ENCODE measurements at regions of chr1 and their contacts with region 1.

Region 1: DNA sequence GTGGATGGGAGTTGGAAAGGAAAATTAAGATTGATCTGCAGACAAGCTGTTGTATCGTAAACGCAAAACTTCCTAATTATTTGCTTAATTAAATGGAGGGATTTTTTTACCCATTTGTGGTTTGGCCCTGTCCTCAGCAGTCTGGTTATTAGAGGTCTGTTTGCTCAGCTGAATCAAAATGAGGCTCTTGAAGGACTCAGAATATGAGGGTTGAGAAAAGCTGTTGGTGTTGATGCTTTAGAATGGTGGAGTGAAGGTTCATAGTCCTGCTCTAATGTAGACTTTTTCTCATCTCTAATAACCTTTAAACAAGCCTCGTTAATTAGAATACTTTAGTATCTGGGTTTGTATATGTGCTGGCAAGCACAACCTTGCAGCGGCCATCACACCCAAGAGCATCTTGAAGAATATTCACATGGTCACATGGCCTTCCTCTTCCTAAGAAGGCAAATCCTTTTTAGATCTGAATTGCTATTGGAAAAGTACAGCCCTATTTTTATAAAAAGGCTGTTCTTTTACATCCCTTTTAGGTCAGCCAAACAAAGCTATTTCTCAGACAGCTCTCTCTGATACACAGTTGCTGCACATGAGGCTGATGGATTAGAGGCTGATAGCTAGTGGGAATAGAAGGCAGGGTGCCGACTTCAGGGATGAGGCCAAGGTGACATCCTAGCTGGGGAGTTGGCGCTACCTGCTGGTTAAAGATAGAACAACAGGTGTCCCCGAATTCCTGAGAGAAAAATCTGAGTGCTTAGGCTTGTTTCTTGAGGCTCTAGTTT is 53.8 kb downstream of the MACF1 start:
- DNase-seq: peak; percentile 54 to 71 (median 61)
- H3K4me3 ChIP-seq: no peak overlapping the region
- H3K4me3 Mint-ChIP-seq: peak overlapping the region in 1 of 8 donors; percentile 22
- H3K27ac ChIP-seq: peak overlapping the region; percentile 27
- H3K27ac Mint-ChIP-seq: peak overlapping the region; percentile 41 to 88 (median 81)
- H3K4me1 ChIP-seq: peaks cover 36% of the 10 kb centered on the region
- H3K4me1 Mint-ChIP-seq: peaks cover 20 to 42% (median 30%) of the 10 kb centered on the region in 4 donors
- H3K27me3 ChIP-seq: no peaks in the 10 kb centered on the region
- H3K27me3 Mint-ChIP-seq: no peaks in the 10 kb centered on the region

Region 2: DNA sequence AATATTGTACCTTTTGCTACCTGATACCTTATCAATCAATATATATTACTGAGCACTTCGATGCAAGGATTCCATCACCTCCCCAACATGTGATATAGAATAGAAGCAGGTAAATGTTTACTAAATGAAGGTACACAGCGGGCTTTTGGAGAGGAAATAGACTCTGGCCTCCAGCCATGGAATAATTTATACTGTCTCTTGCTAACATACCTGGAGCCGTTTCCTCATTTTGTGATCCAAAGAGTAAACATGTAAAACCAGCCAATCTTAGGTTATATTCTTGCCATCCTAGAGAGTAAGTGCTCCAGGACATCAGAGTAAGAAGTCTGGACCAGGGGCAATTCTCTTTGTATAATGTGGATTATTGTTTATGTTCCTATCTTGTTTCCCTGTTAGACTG is 192.8 kb before region 1 on chr1:
- CTCF ChIA-PET with region 1: no interaction called
- POLR2A ChIA-PET with region 1: no interaction called
- intact Hi-C with region 1: no loop called
- DNase-seq: no peak
- H3K4me3 ChIP-seq: no peak overlapping the region
- H3K4me3 Mint-ChIP-seq: no peak overlapping the region
- H3K27ac ChIP-seq: no peak overlapping the region
- H3K27ac Mint-ChIP-seq: no peak overlapping the region
- H3K4me1 ChIP-seq: no peaks in the 10 kb centered on the region
- H3K4me1 Mint-ChIP-seq: peaks cover 0 to 1% (median 0%) of the 10 kb centered on the region in 4 donors
- H3K27me3 ChIP-seq: no peaks in the 10 kb centered on the region
- H3K27me3 Mint-ChIP-seq: no peaks in the 10 kb centered on the region

Region 3: DNA sequence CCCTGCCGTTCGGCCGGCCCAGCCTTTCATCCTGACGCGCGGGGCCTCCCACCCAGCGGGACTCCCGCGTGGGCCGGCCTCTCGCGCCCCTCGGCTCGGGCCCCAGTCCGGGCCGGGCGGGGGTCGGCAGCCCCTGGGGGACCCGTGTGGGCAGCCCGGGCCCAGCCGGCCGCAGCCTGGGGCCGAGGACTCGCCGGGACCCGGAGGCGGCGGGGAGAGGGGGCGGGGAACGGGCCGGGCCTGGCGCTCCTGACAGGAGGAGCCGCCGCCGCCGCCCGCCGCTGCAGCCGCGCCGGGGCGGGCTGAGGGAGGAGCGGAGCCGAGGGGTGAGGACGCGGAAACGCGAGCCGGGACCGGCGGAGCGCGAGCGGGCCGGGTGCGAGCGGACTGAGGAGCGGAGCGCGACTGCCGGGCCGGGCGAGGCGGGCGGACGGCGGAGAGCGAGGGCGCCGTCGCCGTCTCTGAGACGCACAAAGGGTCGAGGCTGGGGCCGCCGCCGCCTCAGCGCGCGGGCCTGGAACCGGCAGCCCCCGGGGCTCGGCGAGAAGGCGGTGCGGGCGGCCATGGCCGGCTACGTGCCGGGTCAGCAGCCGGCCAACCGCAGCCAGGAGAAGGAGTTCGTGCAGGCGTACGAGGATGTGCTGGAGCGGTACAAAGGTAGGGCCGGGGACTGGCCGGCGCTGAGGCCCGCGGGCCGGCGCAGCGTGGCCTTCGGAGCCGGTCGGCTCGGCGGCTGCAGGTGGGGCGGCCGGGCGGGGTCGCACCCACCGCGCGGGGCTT is 153.1 kb before region 1 on chr1:
- CTCF ChIA-PET with region 1: interaction called, 20 read pairs
- POLR2A ChIA-PET with region 1: interaction called, 3 read pairs
- intact Hi-C with region 1: loop called (anchors 1 kb)
- DNase-seq: peak; percentile 54 to 68 (median 57)
- H3K4me3 ChIP-seq: peak overlapping the region; percentile 20 to 59
- H3K4me3 Mint-ChIP-seq: peak overlapping the region in 6 of 8 donors; percentile 55 to 90 (median 68)
- H3K27ac ChIP-seq: peak overlapping the region; percentile 48
- H3K27ac Mint-ChIP-seq: peak overlapping the region in 1 of 7 donors; percentile 57
- H3K4me1 ChIP-seq: peaks cover 19% of the 10 kb centered on the region
- H3K4me1 Mint-ChIP-seq: peaks cover 17 to 33% (median 24%) of the 10 kb centered on the region in 4 donors
- H3K27me3 ChIP-seq: no peaks in the 10 kb centered on the region
- H3K27me3 Mint-ChIP-seq: no peaks in the 10 kb centered on the region

Region 4: GRCh38 chr1:39183503-39184353 is 74.6 kb before region 1 on chr1:
- CTCF ChIA-PET with region 1: interaction called, 820 read pairs
- POLR2A ChIA-PET with region 1: interaction called, 16 read pairs
- intact Hi-C with region 1: loop called (anchors 1 kb)
- DNase-seq: peak; percentile 83 to 95 (median 87)
- H3K4me3 ChIP-seq: no peak overlapping the region
- H3K4me3 Mint-ChIP-seq: peak overlapping the region in 5 of 8 donors; percentile 8 to 53 (median 35)
- H3K27ac ChIP-seq: peak overlapping the region; percentile 70
- H3K27ac Mint-ChIP-seq: peak overlapping the region; percentile 90 to 98 (median 96)
- H3K4me1 ChIP-seq: peaks cover 34% of the 10 kb centered on the region
- H3K4me1 Mint-ChIP-seq: peaks cover 18 to 44% (median 30%) of the 10 kb centered on the region in 4 donors
- H3K27me3 ChIP-seq: no peaks in the 10 kb centered on the region
- H3K27me3 Mint-ChIP-seq: no peaks in the 10 kb centered on the region

Region 5: DNA sequence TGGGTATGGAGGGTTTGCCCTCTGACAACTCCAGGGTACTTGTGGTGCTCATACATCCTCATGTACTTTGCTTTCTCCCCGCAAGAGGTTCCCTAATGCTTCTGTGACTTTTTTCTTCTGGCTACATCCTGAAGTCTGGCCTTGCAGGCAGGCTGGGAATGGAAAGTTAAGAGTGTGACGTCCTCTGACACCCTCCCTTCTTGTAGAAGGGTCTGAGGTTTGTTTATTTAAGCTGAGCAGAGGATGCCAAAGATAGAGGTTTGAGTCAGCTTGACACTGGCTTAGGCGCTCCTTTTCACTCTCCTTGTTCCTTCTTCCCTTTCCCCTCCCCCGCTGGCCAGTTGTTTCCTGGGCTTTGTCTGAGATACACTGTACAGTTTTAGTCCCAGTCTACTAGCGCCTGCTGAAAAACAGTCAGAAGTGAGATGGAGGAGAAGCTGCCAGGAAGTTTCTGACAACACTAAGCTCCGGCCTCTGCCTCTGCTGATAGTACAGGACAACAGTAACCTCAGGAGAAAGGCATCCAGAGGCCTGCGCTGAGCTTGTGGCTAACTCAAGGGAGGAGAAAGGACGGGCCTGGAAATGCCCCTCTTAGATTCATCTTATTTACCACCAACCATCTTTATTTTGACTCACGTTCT is 53.8 kb before region 1 on chr1 and contains the start of gene MACF1:
- CTCF ChIA-PET with region 1: interaction called, 87 read pairs
- POLR2A ChIA-PET with region 1: interaction called, 12 read pairs
- intact Hi-C with region 1: no loop called
- DNase-seq: peak in 2 of 5 donors; percentile 25 to 80
- H3K4me3 ChIP-seq: peak within 1 kb of the TSS; percentile 55 to 63
- H3K4me3 Mint-ChIP-seq: peak within 1 kb of the TSS; percentile 90 to 99 (median 96)
- H3K27ac ChIP-seq: peak within 1 kb of the TSS; percentile 78
- H3K27ac Mint-ChIP-seq: peak within 1 kb of the TSS; percentile 89 to 98 (median 94)
- H3K4me1 ChIP-seq: peaks cover 53% of the 10 kb centered on the region
- H3K4me1 Mint-ChIP-seq: peaks cover 38 to 72% (median 56%) of the 10 kb centered on the region in 4 donors
- H3K27me3 ChIP-seq: no peaks in the 10 kb centered on the region
- H3K27me3 Mint-ChIP-seq: no peaks in the 10 kb centered on the region
- total RNA-seq, gene MACF1: 329 to 387 TPM

Region 6: GRCh38 chr1:39214998-39215873 is 43.1 kb before region 1 on chr1:
- CTCF ChIA-PET with region 1: interaction called, 87 read pairs
- POLR2A ChIA-PET with region 1: interaction called, 13 read pairs
- intact Hi-C with region 1: no loop called
- DNase-seq: peak; percentile 34 to 70 (median 42)
- H3K4me3 ChIP-seq: peak overlapping the region; percentile 65 to 69
- H3K4me3 Mint-ChIP-seq: peak overlapping the region; percentile 92 to 99 (median 94)
- H3K27ac ChIP-seq: peak overlapping the region; percentile 75
- H3K27ac Mint-ChIP-seq: peak overlapping the region; percentile 89 to 96 (median 92)
- H3K4me1 ChIP-seq: peaks cover 58% of the 10 kb centered on the region
- H3K4me1 Mint-ChIP-seq: peaks cover 34 to 71% (median 48%) of the 10 kb centered on the region in 4 donors
- H3K27me3 ChIP-seq: no peaks in the 10 kb centered on the region
- H3K27me3 Mint-ChIP-seq: no peaks in the 10 kb centered on the region

Region 7: GRCh38 chr1:39220891-39221870 is 37.2 kb before region 1 on chr1:
- CTCF ChIA-PET with region 1: interaction called, 22 read pairs
- POLR2A ChIA-PET with region 1: interaction called, 13 read pairs
- intact Hi-C with region 1: no loop called
- DNase-seq: no peak
- H3K4me3 ChIP-seq: no peak overlapping the region
- H3K4me3 Mint-ChIP-seq: peak overlapping the region; percentile 2 to 87 (median 56)
- H3K27ac ChIP-seq: no peak overlapping the region
- H3K27ac Mint-ChIP-seq: peak overlapping the region; percentile 19 to 94 (median 83)
- H3K4me1 ChIP-seq: peaks cover 84% of the 10 kb centered on the region
- H3K4me1 Mint-ChIP-seq: peaks cover 54 to 86% (median 71%) of the 10 kb centered on the region in 4 donors
- H3K27me3 ChIP-seq: no peaks in the 10 kb centered on the region
- H3K27me3 Mint-ChIP-seq: no peaks in the 10 kb centered on the region

Region 8: DNA sequence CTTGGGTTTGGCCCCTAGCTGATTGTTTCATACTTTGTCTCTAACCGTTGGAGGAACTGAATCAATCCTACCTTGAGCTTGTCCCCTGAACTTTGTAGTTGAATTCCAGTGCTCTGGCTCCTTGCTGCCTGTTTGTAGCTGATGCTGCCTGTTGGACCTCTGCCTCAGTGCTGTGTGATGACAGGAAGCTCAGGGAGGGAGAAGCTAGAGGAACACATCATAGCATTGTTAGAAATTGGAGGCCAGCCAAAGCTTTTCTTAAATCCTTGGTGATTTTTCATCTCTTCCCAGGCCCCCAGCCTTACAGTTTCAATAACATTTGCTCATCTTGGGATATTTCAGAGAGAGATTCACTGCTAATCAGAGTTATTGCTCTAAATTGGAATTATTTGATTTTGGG is 19.9 kb before region 1 on chr1:
- CTCF ChIA-PET with region 1: interaction called, 22 read pairs
- POLR2A ChIA-PET with region 1: no interaction called
- intact Hi-C with region 1: no loop called
- DNase-seq: no peak
- H3K4me3 ChIP-seq: no peak overlapping the region
- H3K4me3 Mint-ChIP-seq: peak overlapping the region in 2 of 8 donors; percentile 12 to 59
- H3K27ac ChIP-seq: peak overlapping the region; percentile 21
- H3K27ac Mint-ChIP-seq: peak overlapping the region; percentile 48 to 89 (median 80)
- H3K4me1 ChIP-seq: peaks cover 34% of the 10 kb centered on the region
- H3K4me1 Mint-ChIP-seq: peaks cover 34 to 70% (median 50%) of the 10 kb centered on the region in 4 donors
- H3K27me3 ChIP-seq: no peaks in the 10 kb centered on the region
- H3K27me3 Mint-ChIP-seq: no peaks in the 10 kb centered on the region

Region 9: GRCh38 chr1:39391691-39392679 is 133.7 kb after region 1 on chr1:
- CTCF ChIA-PET with region 1: no interaction called
- POLR2A ChIA-PET with region 1: no interaction called
- intact Hi-C with region 1: no loop called
- DNase-seq: no peak
- H3K4me3 ChIP-seq: no peak overlapping the region
- H3K4me3 Mint-ChIP-seq: peak overlapping the region in 5 of 8 donors; percentile 3 to 41 (median 13)
- H3K27ac ChIP-seq: no peak overlapping the region
- H3K27ac Mint-ChIP-seq: peak overlapping the region; percentile 1 to 83 (median 65)
- H3K4me1 ChIP-seq: peaks cover 64% of the 10 kb centered on the region
- H3K4me1 Mint-ChIP-seq: peaks cover 55 to 79% (median 69%) of the 10 kb centered on the region in 4 donors
- H3K27me3 ChIP-seq: no peaks in the 10 kb centered on the region
- H3K27me3 Mint-ChIP-seq: no peaks in the 10 kb centered on the region

Region 10: GRCh38 chr1:39462074-39462473 is 203.7 kb after region 1 on chr1:
- CTCF ChIA-PET with region 1: no interaction called
- POLR2A ChIA-PET with region 1: no interaction called
- intact Hi-C with region 1: no loop called
- DNase-seq: no peak
- H3K4me3 ChIP-seq: no peak overlapping the region
- H3K4me3 Mint-ChIP-seq: no peak overlapping the region
- H3K27ac ChIP-seq: no peak overlapping the region
- H3K27ac Mint-ChIP-seq: peak overlapping the region in 4 of 7 donors; percentile 27 to 43 (median 38)
- H3K4me1 ChIP-seq: no peaks in the 10 kb centered on the region
- H3K4me1 Mint-ChIP-seq: peaks cover 0 to 2% (median 0%) of the 10 kb centered on the region in 4 donors
- H3K27me3 ChIP-seq: no peaks in the 10 kb centered on the region
- H3K27me3 Mint-ChIP-seq: no peaks in the 10 kb centered on the region